ENCODE measurements at regions of chr1 and their contacts with region 1.

Region 1: GRCh38 chr1:84944767-84945486 is 51.9 kb upstream of the LPAR3 start:
- DNase-seq: no peak
- ATAC-seq: peak; percentile 99

Region 2: GRCh38 chr1:84298328-84298683 is 646.6 kb before region 1 on chr1:
- intact Hi-C with region 1: no loop called
- DNase-seq: peak; percentile 77
- ATAC-seq: peak; percentile 93

Region 3: GRCh38 chr1:84795966-84796600 is 148.8 kb before region 1 on chr1:
- intact Hi-C with region 1: no loop called
- DNase-seq: no peak
- ATAC-seq: peak; percentile 56

Region 4: DNA sequence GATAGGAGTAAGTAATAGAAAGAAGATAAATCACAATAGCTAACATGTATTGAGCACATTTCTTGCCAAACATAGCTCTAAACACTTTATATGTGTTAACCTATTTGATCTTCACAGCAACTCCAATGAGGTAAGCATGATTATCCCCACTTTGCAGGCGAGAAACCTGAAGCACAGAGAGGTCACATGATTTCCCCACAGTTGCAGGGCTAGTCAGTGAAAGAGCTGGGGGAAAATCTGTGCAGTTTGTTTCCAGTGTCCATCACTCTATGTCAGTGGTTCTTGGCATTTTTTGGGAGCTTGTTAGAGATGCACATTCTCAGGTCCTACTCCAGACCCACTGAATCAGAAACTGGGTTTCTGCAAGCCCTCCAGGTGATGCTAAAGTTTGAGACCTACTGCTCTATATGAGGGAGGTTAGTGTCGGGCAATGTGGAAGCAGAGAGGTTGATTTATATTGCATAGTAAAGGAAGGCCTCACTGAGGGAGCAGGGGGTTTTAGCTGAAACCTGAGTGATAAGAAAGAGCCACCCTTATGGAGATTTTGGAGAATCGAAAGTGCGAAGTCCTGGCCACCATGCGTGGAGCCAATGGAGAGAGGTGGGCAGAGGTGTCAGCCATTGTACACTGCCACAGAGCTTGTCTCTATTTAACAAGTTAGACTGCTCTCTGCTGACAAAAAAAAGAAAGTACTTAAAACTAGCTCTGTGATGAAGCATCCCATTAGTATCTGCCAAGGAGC is 82.5 kb after region 1 on chr1:
- intact Hi-C with region 1: loop called (anchors 5 kb)
- DNase-seq: no peak
- ATAC-seq: peak; percentile 73

Region 5: GRCh38 chr1:85137684-85138111 is 192.8 kb after region 1 on chr1:
- intact Hi-C with region 1: no loop called
- DNase-seq: peak; percentile 82
- ATAC-seq: peak; percentile 94

Measured in Right ventricle myocardium superior (tissue), 1 donor.